Posterior vena cava (tissue), 2 donors: ENCODE measurements at regions of chr3 and their contacts with region 1.

Region 1: DNA sequence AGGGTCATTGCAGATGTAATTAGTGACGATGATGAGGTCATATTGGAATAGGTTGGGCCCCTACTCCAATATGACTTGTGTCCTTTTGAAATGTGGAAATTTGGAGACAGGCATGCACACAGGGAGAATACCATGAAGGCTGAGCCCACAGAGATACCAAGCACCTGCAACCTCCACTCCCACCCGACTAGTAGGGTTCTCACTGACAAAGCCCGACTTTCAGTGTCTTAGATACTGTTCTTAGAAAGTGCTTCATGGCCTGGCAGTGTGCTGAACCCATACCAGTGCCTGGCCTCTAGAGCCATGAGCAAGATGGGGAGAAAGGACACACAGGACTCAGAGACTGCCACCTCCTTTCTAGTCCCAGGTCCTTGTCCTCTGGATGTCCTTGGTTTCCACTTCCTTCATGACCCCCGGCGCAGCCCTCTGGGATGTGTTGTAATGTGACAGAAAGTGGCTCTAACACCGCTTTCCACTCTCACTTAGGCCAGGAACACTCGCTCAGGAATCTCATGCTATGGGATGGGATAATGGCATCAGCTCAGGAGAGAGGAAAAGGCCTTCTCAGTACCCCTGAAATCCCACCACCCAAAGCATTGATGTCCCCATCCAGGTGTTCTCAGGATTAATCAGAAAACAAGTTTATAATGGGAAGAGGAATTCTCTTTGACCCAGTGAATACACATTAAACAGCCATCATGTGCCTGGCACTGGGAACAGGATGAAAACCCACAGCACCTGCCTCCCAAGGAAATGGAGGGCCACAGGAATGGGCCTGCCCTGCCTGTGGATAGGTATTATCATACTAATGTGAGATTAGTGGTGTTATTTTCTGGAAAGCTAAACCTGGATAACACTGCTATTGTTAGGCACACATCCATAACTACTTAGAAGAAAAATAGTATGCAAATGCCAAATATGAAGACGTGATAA is 59.9 kb downstream of the RPL39L start:
- DNase-seq: no peak

Region 2: GRCh38 chr3:187011915-187012314 is 67.4 kb before region 1 on chr3:
- intact Hi-C with region 1: no loop called
- DNase-seq: no peak

Region 3: DNA sequence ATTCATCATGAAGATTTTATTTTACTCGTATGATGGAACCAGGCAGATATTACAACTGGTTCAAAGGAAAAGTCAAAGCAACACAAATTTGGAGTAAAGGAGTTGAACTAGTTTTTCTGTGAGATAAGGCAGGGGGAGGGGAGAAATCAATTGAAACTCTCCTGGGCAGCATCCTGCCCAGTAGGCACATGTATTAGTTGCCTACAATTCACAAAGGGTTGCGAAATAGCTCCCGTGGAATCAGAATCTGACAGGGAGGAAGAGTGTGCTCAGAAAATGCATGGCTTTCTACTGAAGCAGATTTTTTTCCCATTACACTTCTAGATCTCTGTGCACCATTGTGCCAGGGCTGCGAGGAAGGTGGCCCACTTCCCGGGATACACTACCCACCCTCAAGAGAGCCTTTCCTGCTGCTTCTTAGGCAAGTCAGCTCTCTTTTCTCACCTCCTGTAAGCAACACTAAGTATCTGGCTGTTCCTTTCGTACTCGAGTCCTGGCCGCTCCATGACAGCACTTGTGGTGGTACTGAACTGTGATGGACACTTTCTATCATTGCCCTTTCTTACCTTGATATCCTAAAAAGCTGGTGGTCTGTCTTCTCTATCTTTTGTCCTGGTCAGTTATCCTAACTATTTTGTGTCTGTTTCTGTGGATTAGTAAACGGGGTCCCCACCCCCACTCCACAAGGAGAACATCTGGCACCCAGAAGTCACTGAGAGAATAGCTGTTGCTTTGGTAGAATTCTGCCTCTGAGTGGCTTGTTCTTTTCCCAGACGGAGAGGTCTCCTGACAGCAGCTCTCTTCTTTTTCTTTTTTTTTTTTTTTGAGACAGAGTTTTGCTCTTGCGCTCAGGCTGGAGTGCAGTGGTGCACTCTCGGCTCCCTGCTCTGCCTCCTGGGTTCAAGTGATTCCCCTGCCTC is 14.9 kb before region 1 on chr3:
- intact Hi-C with region 1: loop called in 1 of 2 experiments (anchors 2 kb)
- DNase-seq: no peak

Region 4: GRCh38 chr3:187125319-187126031 is 46.1 kb after region 1 on chr3:
- intact Hi-C with region 1: no loop called
- DNase-seq: no peak

Region 5: DNA sequence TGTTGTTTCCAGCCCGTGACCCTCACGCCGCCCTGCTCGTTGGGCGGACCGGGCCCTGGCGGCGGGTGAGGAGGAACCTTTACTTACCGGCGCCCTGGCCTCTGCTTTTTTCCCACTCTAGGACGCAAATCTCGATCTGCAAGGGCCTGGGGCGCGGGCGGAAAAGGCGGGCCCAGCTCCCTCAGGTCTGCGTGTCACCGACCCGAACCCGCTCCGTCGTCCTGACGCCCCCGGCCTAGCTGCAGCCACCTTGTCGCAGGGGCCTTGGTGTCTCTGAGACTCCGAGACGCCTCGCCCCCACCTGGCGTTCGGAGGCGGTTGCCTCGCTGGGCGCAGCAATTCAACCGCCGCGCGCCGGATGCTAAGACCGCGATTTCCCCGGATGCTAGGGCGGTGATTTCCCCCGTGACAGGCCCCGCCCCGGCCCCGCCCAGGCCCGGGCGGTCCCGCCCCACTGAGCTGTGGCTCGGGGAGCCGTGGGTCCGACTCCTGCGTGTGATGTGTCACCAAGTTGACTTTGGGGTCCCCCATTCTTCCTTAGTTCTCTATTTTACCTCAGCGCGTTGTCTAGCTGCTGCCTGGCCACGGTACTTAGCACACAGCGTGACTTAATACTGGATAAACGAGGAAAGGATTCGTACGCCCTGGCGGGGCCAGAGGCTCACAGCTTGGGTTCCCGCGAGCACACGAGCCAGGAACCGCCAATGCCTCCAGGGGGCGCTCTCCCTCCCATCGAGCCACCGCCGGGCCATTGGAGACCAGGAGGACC is 60.0 kb after region 1 on chr3 and contains the start of gene RPL39L:
- intact Hi-C with region 1: no loop called
- DNase-seq: peak; percentile 95
- total RNA-seq, gene RPL39L: 5.8 to 9.4 TPM